ENCODE measurements at regions of chr20 and their contacts with region 1.

Region 1: DNA sequence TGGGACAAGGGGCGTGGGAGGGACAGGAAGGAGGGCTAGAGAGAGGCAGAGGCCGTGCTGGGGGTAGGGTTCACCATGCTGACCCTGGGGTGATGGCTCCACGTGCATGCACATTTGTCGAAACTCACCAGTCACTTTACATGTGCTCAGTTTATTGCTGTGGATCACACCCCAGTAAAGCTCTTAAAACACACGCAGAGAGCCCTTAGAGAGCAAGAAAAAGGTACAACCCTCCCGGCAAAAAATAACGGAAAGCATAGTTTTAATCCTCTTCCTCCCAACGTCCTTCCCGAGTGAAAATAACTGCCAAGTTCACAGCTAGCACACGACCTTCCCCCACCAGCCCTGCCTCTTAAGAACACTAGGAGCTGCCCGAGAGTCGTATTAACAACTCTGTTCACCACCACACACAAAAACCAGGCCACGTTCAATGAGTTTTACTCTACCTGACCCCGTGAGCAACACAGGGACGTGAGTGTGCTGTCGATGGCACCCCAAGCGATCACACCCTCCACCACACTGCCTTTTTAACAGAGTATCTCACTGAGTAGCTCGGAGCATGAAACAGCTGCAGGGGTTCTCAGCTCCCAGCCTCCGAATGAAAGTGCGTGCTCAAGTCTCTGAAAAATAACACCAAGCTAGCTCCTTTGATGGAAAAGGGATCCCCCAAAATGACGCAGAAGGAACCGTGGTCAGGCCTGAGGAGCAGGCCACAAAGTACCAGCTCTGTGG is 39.7 kb downstream of the TAF4 start:
- DNase-seq: peak; percentile 20 to 66
- ATAC-seq: peak; percentile 73 to 96 (median 93)
- H3K4me3 ChIP-seq: no peak overlapping the region
- H3K4me3 Mint-ChIP-seq: no peak overlapping the region
- H3K27ac ChIP-seq: no peak overlapping the region
- H3K27ac Mint-ChIP-seq: peak overlapping the region; percentile 47 to 50
- H3K4me1 ChIP-seq: peaks cover 16% of the 10 kb centered on the region
- H3K4me1 Mint-ChIP-seq: peaks cover 41 to 42% of the 10 kb centered on the region in 2 donors
- H3K27me3 ChIP-seq: no peaks in the 10 kb centered on the region
- H3K27me3 Mint-ChIP-seq: no peaks in the 10 kb centered on the region
- CTCF ChIP-seq: peak; percentile 53

Region 2: DNA sequence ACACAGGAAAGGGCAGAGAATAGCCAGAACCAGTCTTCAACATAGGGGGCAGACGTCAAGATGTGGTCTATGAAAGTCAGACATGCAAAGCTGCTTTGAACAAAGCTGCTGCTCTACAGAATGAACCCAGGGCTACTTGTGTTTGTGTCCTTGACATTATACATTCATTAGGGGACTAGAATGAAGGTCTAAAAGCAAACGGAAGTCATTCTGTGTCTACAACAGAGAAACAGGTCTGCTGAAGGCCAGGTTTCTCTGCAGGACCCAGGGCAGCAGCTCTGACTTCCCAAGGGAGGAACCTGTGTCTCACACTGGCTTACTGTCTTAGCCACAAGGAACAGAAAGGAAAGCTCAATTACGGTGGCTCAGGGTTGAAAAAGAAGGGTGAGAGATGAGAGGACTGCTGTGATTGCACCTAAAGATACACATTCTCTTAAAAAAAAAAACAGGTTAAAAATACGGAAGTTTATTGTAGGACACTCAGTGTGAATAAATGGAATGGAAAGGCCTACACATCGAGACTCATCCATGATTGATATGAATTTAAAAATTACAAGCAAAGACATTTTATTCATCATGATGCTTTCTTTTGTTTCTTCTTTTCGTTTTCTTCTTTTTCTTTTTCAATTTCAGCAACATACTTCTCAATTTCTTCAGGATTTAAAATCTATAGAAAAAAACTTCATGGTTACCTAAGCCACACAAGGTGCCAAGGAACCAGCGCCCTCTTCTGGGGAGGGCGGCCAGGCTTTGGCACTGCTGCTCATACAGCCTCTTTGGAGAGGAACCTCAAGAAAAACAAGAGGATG is 110.5 kb after region 1 on chr20:
- intact Hi-C with region 1: loop called (anchors 1 kb)
- DNase-seq: peak; percentile 58 to 88
- ATAC-seq: peak; percentile 58 to 73 (median 60)
- H3K4me3 ChIP-seq: no peak overlapping the region
- H3K4me3 Mint-ChIP-seq: no peak overlapping the region
- H3K27ac ChIP-seq: no peak overlapping the region
- H3K27ac Mint-ChIP-seq: peak overlapping the region; percentile 51 to 76
- H3K4me1 ChIP-seq: peaks cover 21% of the 10 kb centered on the region
- H3K4me1 Mint-ChIP-seq: peaks cover 44 to 50% of the 10 kb centered on the region in 2 donors
- H3K27me3 ChIP-seq: no peaks in the 10 kb centered on the region
- H3K27me3 Mint-ChIP-seq: no peaks in the 10 kb centered on the region
- CTCF ChIP-seq: peak; percentile 73

Measured in natural killer cell (primary cell).